ENCODE measurements at regions of chr20 and their contacts with region 1.

Region 1: GRCh38 chr20:59291710-59292109 is 8.7 kb upstream of the EDN3 start:
- DNase-seq: peak; percentile 49 to 79
- H3K4me3 ChIP-seq: no peak overlapping the region
- H3K4me3 Mint-ChIP-seq: no peak overlapping the region
- H3K27ac Mint-ChIP-seq: no peak overlapping the region
- H3K4me1 ChIP-seq: peaks cover 47% of the 10 kb centered on the region
- H3K4me1 Mint-ChIP-seq: peaks cover 34% of the 10 kb centered on the region
- H3K27me3 ChIP-seq: no peaks in the 10 kb centered on the region
- H3K27me3 Mint-ChIP-seq: no peaks in the 10 kb centered on the region
- CTCF ChIP-seq: no peak

Region 2: GRCh38 chr20:59242714-59243113 is 49.0 kb before region 1 on chr20:
- CTCF ChIA-PET with region 1: no interaction called
- POLR2A ChIA-PET with region 1: no interaction called
- intact Hi-C with region 1: loop called (anchors 1 kb)
- DNase-seq: no peak
- H3K4me3 ChIP-seq: no peak overlapping the region
- H3K4me3 Mint-ChIP-seq: peak overlapping the region; percentile 50
- H3K27ac Mint-ChIP-seq: peak overlapping the region; percentile 56
- H3K4me1 ChIP-seq: peaks cover 39% of the 10 kb centered on the region
- H3K4me1 Mint-ChIP-seq: peaks cover 39% of the 10 kb centered on the region
- H3K27me3 ChIP-seq: no peaks in the 10 kb centered on the region
- H3K27me3 Mint-ChIP-seq: peaks cover 3% of the 10 kb centered on the region
- CTCF ChIP-seq: peak in 1 of 2 experiments; percentile 27

Region 3: GRCh38 chr20:59269411-59270025 is 22.2 kb before region 1 on chr20:
- CTCF ChIA-PET with region 1: no interaction called
- POLR2A ChIA-PET with region 1: no interaction called
- intact Hi-C with region 1: loop called (anchors 2 kb)
- DNase-seq: no peak
- H3K4me3 ChIP-seq: no peak overlapping the region
- H3K4me3 Mint-ChIP-seq: no peak overlapping the region
- H3K27ac Mint-ChIP-seq: no peak overlapping the region
- H3K4me1 ChIP-seq: peaks cover 13% of the 10 kb centered on the region; the same call in 1 of the 2 replicates
- H3K4me1 Mint-ChIP-seq: peaks cover 9% of the 10 kb centered on the region
- H3K27me3 ChIP-seq: no peaks in the 10 kb centered on the region
- H3K27me3 Mint-ChIP-seq: peaks cover 13% of the 10 kb centered on the region
- CTCF ChIP-seq: no peak

Region 4: DNA sequence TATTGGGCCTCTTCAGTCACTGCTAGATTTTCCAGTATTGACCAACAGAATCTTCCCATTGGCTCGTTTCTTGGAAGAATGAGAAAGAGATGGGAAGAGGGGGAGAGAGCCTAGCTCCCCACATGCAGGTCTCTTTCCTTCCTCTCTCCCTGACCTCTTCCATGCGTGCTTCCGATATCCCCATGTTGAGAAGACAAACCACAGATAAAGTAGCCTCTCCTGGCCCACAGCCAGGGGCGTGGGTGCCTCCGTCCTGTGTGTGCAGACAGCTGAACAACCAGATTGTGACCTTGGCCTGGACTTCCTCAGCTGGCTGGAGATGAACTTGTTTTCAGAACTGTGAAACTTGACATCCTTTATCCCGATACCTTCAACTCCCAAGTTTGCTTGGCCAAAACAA is 79.7 kb after region 1 on chr20:
- CTCF ChIA-PET with region 1: no interaction called
- POLR2A ChIA-PET with region 1: no interaction called
- intact Hi-C with region 1: no loop called
- DNase-seq: no peak
- H3K4me3 ChIP-seq: no peak overlapping the region
- H3K4me3 Mint-ChIP-seq: no peak overlapping the region
- H3K27ac Mint-ChIP-seq: no peak overlapping the region
- H3K4me1 ChIP-seq: no peaks in the 10 kb centered on the region
- H3K4me1 Mint-ChIP-seq: peaks cover 11% of the 10 kb centered on the region
- H3K27me3 ChIP-seq: no peaks in the 10 kb centered on the region
- H3K27me3 Mint-ChIP-seq: peaks cover 10% of the 10 kb centered on the region
- CTCF ChIP-seq: no peak

Region 5: GRCh38 chr20:59395729-59396128 is 104.0 kb after region 1 on chr20:
- CTCF ChIA-PET with region 1: interaction called, 3 read pairs
- POLR2A ChIA-PET with region 1: no interaction called
- intact Hi-C with region 1: loop called (anchors 2 kb)
- DNase-seq: no peak
- H3K4me3 ChIP-seq: no peak overlapping the region
- H3K4me3 Mint-ChIP-seq: no peak overlapping the region
- H3K27ac Mint-ChIP-seq: no peak overlapping the region
- H3K4me1 ChIP-seq: peaks cover 8% of the 10 kb centered on the region; the same call in 1 of the 2 replicates
- H3K4me1 Mint-ChIP-seq: no peaks in the 10 kb centered on the region
- H3K27me3 ChIP-seq: no peaks in the 10 kb centered on the region
- H3K27me3 Mint-ChIP-seq: peaks cover 4% of the 10 kb centered on the region
- CTCF ChIP-seq: no peak

Region 6: DNA sequence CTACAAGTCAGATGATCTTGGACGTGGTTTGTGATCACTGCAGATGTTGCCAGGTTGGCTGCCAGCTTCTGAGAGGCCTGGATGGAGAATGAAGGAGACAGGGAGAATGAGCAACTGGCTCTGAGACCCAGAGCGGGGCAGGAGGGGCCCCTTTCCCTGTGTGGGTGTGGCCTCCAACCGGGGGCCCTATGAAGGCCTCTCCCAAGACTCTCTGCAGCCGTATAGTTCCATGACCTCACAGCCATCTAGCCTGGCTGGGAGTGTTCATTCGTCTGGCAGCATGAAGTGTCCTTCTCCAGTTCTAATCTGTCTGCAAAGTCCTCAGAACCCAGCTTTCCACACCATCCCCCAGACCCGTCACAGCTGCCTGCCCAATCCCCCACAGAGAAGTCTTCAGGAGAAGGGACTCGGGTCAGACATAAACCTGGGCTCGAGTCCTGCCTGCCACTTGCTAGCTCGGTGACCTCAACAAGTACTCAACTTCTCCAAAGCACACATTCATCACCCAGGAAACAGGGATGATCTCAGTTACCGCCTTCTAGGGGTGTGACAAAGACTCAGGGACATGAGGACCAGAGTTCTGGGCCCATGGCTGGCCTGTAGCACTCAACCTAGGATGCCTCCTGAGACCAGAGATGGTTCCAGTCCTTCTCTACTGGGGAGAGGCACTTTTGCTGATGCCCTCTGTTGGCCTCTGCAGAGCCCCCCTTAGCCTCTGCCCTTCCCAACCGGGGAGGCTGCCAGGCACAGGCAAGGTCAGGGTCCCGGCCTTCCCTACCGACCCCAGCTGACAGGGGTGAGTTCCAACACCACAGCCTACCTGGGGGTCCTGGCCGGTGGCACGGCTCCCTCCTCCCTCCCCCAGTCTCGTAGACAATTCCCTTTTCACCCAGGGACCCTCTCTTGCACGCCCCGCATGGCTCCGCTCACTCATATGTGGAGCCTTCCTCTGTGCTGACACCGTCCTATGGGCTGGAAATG is 131.5 kb after region 1 on chr20:
- CTCF ChIA-PET with region 1: no interaction called
- POLR2A ChIA-PET with region 1: no interaction called
- intact Hi-C with region 1: no loop called
- DNase-seq: no peak
- H3K4me3 ChIP-seq: no peak overlapping the region
- H3K4me3 Mint-ChIP-seq: no peak overlapping the region
- H3K27ac Mint-ChIP-seq: no peak overlapping the region
- H3K4me1 ChIP-seq: no peaks in the 10 kb centered on the region
- H3K4me1 Mint-ChIP-seq: no peaks in the 10 kb centered on the region
- H3K27me3 ChIP-seq: no peaks in the 10 kb centered on the region; the same call in none of the 2 replicates
- H3K27me3 Mint-ChIP-seq: peaks cover 16% of the 10 kb centered on the region
- CTCF ChIP-seq: no peak